A549 (cell line): ENCODE measurements at regions of chr9 and their contacts with region 1.

Region 1: GRCh38 chr9:69193685-69194032 is 19.6 kb downstream of the TJP2 start:
- DNase-seq: peak in 1 of 2 experiments; percentile 30
- ATAC-seq: peak; percentile 76 to 78; a peak in 5 of 6 replicates
- H3K4me3 ChIP-seq: no peak overlapping the region
- H3K27ac ChIP-seq: no peak overlapping the region
- H3K4me1 ChIP-seq: no peaks in the 10 kb centered on the region
- CTCF ChIP-seq: no peak
- EP300 ChIP-seq: no peak
- POLR2A ChIP-seq: no peak
- RAD21 ChIP-seq: peak in 1 of 2 experiments; percentile 47; a peak in 2 of 5 replicates

Region 2: DNA sequence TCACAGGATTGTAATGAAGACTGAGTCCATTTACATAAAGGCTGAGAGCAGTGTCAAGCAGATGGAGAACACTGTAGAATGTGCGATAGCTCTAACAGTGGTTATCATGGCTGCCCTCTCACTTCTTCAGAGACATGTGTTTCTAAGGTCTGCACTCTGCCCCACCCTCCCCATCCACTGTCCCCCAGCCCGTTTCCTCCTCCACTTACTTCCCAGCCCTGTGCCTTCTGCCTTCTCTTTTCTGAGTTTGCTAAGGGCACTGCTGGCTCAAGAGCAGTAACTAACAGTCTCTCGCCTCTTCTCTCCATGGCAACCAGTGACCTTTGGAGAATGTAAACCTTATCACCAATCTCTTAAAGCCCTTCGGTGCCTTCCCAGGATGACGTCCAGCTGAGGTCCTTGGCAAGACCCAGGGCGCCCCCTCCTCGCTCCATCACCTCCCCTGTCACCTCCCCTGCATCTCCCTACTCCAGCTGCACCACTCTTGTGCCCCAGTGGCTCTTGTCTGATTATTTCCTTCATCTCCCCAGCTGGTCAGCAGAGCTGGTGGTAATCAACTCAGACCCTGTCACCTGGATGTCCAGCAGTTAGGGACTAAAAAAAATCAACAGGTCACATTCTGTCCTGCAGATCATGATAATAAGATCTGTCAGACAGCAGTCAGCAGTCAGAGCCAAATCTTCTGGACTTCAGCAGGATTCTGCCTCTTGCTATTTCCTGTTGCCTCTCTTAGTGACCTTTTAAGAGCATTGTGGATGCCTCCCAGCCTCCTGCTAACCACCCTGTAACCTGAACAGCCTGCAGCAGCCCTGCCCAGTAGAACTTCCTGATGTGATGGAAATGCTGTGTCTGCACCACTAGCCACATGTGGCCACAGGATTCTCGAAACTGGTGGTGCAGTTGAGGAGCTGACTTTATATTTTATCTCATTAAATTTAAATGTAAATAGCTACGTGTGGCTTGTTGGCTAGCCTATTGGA is 149.1 kb before region 1 on chr9:
- CTCF ChIA-PET with region 1: interaction called, 24 read pairs
- POLR2A ChIA-PET with region 1: interaction called, 3 read pairs
- DNase-seq: no peak
- ATAC-seq: no peak
- H3K4me3 ChIP-seq: no peak overlapping the region
- H3K27ac ChIP-seq: no peak overlapping the region
- H3K4me1 ChIP-seq: no peaks in the 10 kb centered on the region
- CTCF ChIP-seq: no peak
- EP300 ChIP-seq: no peak
- POLR2A ChIP-seq: no peak
- RAD21 ChIP-seq: no peak

Region 3: DNA sequence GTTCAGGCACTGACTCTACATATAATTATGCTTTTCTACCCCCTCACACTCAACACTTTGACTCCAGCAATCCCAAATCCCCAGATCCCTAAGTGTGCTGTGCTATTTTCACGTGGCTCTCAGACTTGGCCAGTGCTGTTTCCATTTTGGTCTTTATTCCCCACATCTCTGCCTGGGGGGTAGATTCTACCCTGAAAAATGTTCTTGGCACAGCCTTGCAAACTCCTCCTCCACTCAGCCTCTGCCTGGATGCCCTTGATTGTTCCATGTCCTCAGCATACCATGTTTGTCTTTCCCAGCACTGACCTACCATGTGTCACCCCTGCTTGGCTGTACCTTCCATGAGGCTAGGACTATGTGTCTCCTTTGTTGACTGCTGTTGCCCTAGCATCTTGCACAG is 115.1 kb before region 1 on chr9:
- CTCF ChIA-PET with region 1: interaction called, 11 read pairs
- POLR2A ChIA-PET with region 1: no interaction called
- DNase-seq: no peak
- ATAC-seq: no peak; a peak in 1 of 6 replicates
- H3K4me3 ChIP-seq: no peak overlapping the region
- H3K27ac ChIP-seq: no peak overlapping the region
- H3K4me1 ChIP-seq: no peaks in the 10 kb centered on the region
- CTCF ChIP-seq: no peak
- EP300 ChIP-seq: no peak
- POLR2A ChIP-seq: no peak
- RAD21 ChIP-seq: no peak

Region 4: DNA sequence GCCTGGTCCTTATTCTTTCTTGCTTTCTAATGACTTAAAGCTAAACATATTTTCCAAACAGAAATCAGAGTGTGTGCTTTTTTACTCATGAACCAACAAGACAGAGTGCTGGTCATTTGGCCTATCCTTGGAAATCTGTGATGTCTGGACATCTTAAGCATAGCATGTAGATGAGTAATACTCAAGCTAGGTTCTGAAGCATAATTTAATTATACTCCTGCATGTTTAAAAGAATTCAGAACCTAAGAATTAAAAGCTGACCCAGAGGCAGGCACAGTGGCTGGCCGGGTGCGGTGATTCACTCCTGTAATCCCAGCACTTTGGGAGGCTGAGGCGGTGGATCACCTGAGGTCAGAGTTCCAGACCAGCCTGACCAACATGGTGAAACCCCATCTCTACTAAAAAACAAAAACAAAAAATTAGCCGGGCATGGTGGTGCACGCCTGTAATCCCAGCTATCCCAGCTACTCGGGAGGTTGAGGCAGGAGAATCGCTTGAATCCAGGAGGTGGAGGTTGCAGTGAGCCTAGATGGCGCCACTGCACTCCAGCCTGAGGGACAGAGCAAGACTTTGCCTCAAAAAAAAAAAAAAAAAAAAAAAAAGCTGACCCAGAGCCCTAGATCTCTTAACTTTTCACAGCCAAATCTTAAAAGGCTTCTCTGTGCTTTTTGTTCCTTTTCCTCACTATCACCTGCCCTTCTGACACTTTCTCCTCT is 35.8 kb before region 1 on chr9:
- CTCF ChIA-PET with region 1: interaction called, 21 read pairs
- POLR2A ChIA-PET with region 1: no interaction called
- DNase-seq: no peak
- ATAC-seq: peak in 1 of 2 experiments; percentile 33; a peak in 2 of 6 replicates
- H3K4me3 ChIP-seq: no peak overlapping the region
- H3K27ac ChIP-seq: no peak overlapping the region
- H3K4me1 ChIP-seq: no peaks in the 10 kb centered on the region
- CTCF ChIP-seq: peak; percentile 32; the same call in 2 of the 3 replicates
- EP300 ChIP-seq: no peak
- POLR2A ChIP-seq: no peak
- RAD21 ChIP-seq: 0 out of 5 replicates have a peak, but pooled peaks of 1 of the 2 experiments have one; percentile 16

Region 5: DNA sequence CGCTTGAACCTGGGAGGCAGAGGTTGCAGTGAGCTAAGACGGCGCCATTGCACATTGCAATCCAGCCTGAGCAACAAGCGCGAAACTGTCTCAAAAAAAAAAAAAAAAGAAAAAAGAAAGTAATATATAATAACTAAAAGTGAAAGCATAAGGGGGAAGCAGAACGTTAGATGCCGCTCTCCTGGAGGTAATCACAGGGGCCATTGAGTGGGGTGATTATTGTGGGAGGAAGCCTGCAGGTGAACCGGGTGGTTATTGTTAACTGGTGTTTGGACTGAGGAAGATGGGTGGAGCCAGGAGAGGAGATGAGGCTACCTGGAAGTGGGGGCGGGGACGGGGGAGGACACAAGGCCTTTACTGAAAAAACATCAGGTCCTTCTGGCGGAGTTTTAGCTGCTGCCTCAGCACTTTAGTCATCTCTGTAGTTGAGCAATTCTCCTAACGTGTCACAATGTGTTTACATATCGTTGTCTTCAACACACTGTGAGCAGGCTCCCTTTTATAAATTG is 24.9 kb before region 1 on chr9:
- CTCF ChIA-PET with region 1: interaction called, 14 read pairs
- POLR2A ChIA-PET with region 1: no interaction called
- DNase-seq: no peak
- ATAC-seq: no peak
- H3K4me3 ChIP-seq: no peak overlapping the region
- H3K27ac ChIP-seq: no peak overlapping the region
- H3K4me1 ChIP-seq: no peaks in the 10 kb centered on the region
- CTCF ChIP-seq: no peak
- EP300 ChIP-seq: no peak
- POLR2A ChIP-seq: no peak
- RAD21 ChIP-seq: no peak

Region 6: GRCh38 chr9:69174616-69175463 is 18.8 kb before region 1 on chr9:
- CTCF ChIA-PET with region 1: interaction called, 54 read pairs
- POLR2A ChIA-PET with region 1: interaction called, 3 read pairs
- DNase-seq: no peak
- ATAC-seq: peak in 1 of 2 experiments; percentile 16; a peak in 1 of 6 replicates
- H3K4me3 ChIP-seq: no peak overlapping the region
- H3K27ac ChIP-seq: no peak overlapping the region
- H3K4me1 ChIP-seq: peaks cover 20% of the 10 kb centered on the region
- CTCF ChIP-seq: no peak
- EP300 ChIP-seq: no peak
- POLR2A ChIP-seq: no peak
- RAD21 ChIP-seq: no peak

Region 7: GRCh38 chr9:69180670-69181069 is 13.0 kb before region 1 on chr9:
- CTCF ChIA-PET with region 1: interaction called, 54 read pairs
- POLR2A ChIA-PET with region 1: interaction called, 3 read pairs
- DNase-seq: peak; percentile 64 to 86
- ATAC-seq: peak; percentile 93 to 97
- H3K4me3 ChIP-seq: no peak overlapping the region
- H3K27ac ChIP-seq: peak overlapping the region; percentile 44 to 75; a peak in 5 of 6 replicates
- H3K4me1 ChIP-seq: peaks cover 34% of the 10 kb centered on the region
- CTCF ChIP-seq: no peak
- EP300 ChIP-seq: no peak
- POLR2A ChIP-seq: no peak
- RAD21 ChIP-seq: no peak

Region 8: DNA sequence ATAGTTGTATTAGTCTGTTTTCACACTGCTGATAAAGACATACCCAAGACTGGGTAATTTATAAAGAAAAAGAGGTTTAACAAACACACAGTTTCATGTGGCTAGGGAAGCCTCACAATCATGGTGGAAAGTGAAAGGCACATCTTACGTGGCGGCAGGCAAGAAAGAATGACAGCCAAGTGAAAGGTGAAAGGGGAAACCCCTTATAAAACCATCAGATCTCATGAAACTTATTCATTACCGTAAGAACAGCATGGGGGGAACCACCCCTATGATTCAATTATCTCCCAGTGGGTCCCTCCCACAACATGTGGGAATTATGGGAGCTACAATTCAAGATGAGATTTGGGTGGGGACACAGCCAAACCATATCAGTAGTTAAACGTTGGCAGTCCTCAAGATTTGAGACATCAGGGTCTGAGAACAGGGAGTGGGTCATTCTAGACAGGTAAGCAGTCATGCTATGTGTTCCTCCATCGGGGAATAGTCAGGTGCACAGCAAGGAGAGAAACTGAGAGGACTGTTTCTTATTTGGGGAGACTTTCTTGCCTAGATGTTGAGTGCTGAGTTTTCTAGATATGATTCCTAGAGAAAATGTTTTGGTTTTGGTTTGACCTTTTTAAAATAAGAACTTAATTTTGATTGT is 85.5 kb after region 1 on chr9:
- CTCF ChIA-PET with region 1: no interaction called
- POLR2A ChIA-PET with region 1: no interaction called
- DNase-seq: no peak
- ATAC-seq: no peak
- H3K4me3 ChIP-seq: no peak overlapping the region
- H3K27ac ChIP-seq: no peak overlapping the region
- H3K4me1 ChIP-seq: no peaks in the 10 kb centered on the region
- CTCF ChIP-seq: no peak
- EP300 ChIP-seq: no peak
- POLR2A ChIP-seq: no peak
- RAD21 ChIP-seq: no peak